ENCODE measurements at regions of chr9 and their contacts with region 1.

Region 1: DNA sequence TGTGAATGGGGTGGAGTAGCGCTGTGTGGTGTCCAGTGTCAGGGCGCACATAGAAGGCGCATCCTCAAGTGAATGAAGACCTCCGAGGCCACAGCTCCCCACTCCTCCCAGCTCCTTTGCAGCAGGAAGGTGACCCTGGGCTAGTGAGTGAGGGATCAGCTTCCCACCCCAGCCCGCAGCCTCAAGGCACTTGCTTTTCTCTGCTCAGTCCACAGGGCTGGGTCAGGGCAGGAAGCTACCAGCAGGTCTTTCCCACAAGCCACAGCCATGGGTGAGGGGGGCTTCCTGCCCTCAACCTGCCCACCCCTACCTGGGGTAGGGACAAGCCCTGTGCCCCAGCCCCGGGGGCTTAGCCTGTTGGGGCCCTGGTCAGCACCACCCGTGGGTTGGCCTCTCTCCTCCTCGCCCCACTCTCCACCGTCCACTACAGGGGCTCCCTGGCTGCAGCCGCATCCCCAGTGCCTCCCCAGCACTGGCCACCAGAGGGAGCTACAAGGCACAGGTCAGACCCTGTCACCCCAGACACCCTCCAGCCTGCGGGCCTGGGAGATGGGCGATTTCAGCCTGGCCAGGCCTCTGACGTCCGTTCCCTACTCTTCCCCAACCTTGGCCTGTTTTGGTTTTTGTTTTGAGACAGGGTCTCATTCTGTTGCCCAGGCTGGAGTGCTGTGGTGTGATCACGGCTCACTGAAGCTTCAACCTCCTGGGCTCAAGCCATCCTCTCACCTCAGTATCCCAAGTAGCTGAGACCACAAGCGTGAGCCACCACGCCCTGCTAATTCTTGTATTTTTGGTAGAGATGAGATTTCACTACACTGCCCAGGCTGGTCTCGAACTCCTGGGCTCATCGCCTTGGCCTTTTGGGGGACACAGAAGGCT is 1.3 kb upstream of the ABCA2 start:
- DNase-seq: peak; percentile 29 to 84 (median 52)
- ATAC-seq: peak; percentile 66
- H3K4me3 ChIP-seq: peak overlapping the region; percentile 69
- H3K4me3 Mint-ChIP-seq: peak overlapping the region; percentile 71 to 85 (median 79)
- H3K27ac ChIP-seq: peak overlapping the region; percentile 51
- H3K27ac Mint-ChIP-seq: peak overlapping the region in 2 of 9 donors; percentile 28 to 52
- H3K4me1 ChIP-seq: peaks cover 50 to 56% of the 10 kb centered on the region in 2 donors
- H3K4me1 Mint-ChIP-seq: peaks cover 13 to 40% (median 32%) of the 10 kb centered on the region in 7 donors
- H3K27me3 ChIP-seq: no peaks in the 10 kb centered on the region
- H3K27me3 Mint-ChIP-seq: peaks cover 0 to 11% (median 0%) of the 10 kb centered on the region in 5 donors

Region 2: GRCh38 chr9:137070201-137070905 is 41.1 kb after region 1 on chr9 and contains the start of gene SAPCD2:
- CTCF ChIA-PET with region 1: interaction called, 7 read pairs
- POLR2A ChIA-PET with region 1: no interaction called
- intact Hi-C with region 1: loop called in 1 of 2 experiments (anchors 2 kb)
- DNase-seq: peak; percentile 72 to 88 (median 85)
- ATAC-seq: peak; percentile 94
- H3K4me3 ChIP-seq: peak within 1 kb of the TSS; percentile 27
- H3K4me3 Mint-ChIP-seq: peak within 1 kb of the TSS; percentile 66 to 92 (median 81)
- H3K27ac ChIP-seq: peak within 1 kb of the TSS; percentile 51
- H3K27ac Mint-ChIP-seq: peak within 1 kb of the TSS in 6 of 9 donors; percentile 40 to 86 (median 62)
- H3K4me1 ChIP-seq: peaks cover 11 to 15% of the 10 kb centered on the region in 2 donors
- H3K4me1 Mint-ChIP-seq: peaks cover 10 to 38% (median 12%) of the 10 kb centered on the region in 7 donors
- H3K27me3 ChIP-seq: no peaks in the 10 kb centered on the region
- H3K27me3 Mint-ChIP-seq: no peaks in the 10 kb centered on the region
- total RNA-seq, gene SAPCD2: 0.16 to 22.1 (median 0.74) TPM